Endothelial cell of umbilical vein (primary cell): ENCODE measurements at regions of chr12 and their contacts with region 1.

Region 1: DNA sequence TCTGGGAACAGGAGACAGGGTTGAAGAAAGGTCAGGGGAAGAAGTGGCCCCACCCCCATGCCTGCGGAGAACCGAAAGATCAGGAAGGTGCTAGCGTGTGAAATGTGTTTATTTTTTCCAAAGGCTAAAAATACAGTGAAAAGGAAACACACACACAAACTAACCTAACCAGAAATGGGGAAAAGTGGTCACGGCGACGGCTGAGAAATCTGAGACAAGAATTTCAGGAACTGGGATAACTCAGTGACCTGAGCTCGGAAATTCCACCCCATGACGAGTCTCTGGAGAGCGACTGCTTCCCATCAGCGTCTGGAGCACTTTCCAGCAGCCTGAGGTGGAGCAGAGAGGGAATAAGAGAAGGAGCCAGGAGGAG is 16.6 kb upstream of the RND1 start:
- DNase-seq: peak; percentile 96
- H3K4me3 ChIP-seq: peak overlapping the region in 1 of 3 experiments; percentile 47
- H3K27ac ChIP-seq: peak overlapping the region; percentile 81
- H3K4me1 ChIP-seq: peaks cover 29% of the 10 kb centered on the region
- H3K27me3 ChIP-seq: no peaks in the 10 kb centered on the region
- CTCF ChIP-seq: no peak
- POLR2A ChIP-seq: no peak

Region 2: GRCh38 chr12:48865434-48866290 is 16.6 kb before region 1 on chr12 and contains the start of gene RND1:
- CTCF ChIA-PET with region 1: interaction called, 5 read pairs
- POLR2A ChIA-PET with region 1: interaction called, 13 read pairs
- dilution Hi-C with region 1: no loop called
- intact Hi-C with region 1: loop called (anchors 2 kb)
- DNase-seq: peak; percentile 95
- H3K4me3 ChIP-seq: peak within 1 kb of the TSS in 2 of 3 experiments; percentile 43 to 52
- H3K27ac ChIP-seq: no peak within 1 kb of the TSS
- H3K4me1 ChIP-seq: peaks cover 12% of the 10 kb centered on the region
- H3K27me3 ChIP-seq: peaks cover 17% of the 10 kb centered on the region in 2 experiments
- CTCF ChIP-seq: no peak
- POLR2A ChIP-seq: peak; percentile 97
- total RNA-seq, gene RND1: 4.0 and 4.4 TPM in 2 replicates

Region 3: DNA sequence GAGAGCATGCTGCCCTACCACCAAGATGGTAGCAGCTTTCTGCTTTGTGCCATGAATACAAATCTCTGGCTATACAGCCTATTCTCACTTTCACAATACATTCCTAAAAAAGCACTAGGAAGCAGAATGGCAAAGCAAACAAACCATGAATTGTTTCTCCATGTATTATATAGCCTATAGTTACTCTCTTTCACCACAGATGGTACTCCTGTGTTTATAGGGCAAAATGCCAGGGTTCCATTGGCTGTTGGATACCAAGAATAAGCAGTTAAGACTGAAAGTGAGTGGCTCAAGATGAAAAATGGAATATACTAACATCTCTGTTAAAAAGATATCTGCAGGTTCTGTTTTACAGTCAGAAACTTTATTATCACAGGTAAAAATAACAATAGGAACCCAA is 63.9 kb after region 1 on chr12:
- CTCF ChIA-PET with region 1: no interaction called
- POLR2A ChIA-PET with region 1: no interaction called
- dilution Hi-C with region 1: no loop called
- intact Hi-C with region 1: no loop called
- DNase-seq: no peak
- H3K4me3 ChIP-seq: no peak overlapping the region
- H3K27ac ChIP-seq: no peak overlapping the region
- H3K4me1 ChIP-seq: no peaks in the 10 kb centered on the region
- H3K27me3 ChIP-seq: no peaks in the 10 kb centered on the region
- CTCF ChIP-seq: no peak
- POLR2A ChIP-seq: no peak